Prostate gland (tissue), 2 donors: ENCODE measurements at regions of chr16 and their contacts with region 1.

Region 1: DNA sequence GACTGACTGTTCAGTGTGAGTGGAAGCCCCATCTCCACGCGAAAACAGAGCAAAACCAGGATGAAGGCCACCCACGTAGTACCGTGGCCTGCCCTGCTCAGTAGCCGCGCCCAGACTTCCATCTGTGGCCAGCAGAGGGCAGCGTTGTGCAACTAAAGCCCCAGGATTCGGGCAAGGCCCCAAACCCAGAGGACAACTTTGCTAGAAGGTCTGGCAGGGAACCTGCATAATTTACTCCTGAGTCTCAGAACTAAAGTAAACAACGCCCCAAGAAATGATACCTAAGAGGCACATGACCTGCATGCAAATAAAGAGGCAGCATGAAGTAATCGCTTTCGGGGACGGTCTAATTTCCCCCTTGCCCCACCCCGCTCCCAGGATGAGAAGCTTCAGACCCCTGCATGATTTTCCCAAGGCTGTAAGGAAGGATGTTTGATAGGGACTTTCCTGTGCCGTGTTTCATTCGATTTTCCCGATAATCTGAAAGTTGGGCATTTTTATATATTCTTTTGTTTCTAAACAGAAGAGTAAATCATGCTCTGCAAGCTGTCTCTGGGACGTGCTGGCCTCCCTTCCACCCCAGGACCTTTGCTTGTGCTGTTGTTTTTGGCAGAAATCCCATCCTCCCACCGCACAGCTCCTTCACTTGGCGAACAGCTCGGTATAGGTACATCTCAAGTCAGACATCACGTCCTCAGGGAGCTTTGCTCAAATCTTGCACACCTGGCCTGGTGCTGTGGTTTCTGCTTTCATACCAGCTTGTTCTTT is 18.6 kb downstream of the HSBP1 start:
- DNase-seq: peak; percentile 89
- H3K4me3 ChIP-seq: no peak overlapping the region
- H3K27ac ChIP-seq: no peak overlapping the region
- H3K4me1 ChIP-seq: no peaks in the 10 kb centered on the region
- H3K27me3 ChIP-seq: no peaks in the 10 kb centered on the region
- CTCF ChIP-seq: peak; percentile 73 to 96 (median 90)
- POLR2A ChIP-seq: no peak

Region 2: DNA sequence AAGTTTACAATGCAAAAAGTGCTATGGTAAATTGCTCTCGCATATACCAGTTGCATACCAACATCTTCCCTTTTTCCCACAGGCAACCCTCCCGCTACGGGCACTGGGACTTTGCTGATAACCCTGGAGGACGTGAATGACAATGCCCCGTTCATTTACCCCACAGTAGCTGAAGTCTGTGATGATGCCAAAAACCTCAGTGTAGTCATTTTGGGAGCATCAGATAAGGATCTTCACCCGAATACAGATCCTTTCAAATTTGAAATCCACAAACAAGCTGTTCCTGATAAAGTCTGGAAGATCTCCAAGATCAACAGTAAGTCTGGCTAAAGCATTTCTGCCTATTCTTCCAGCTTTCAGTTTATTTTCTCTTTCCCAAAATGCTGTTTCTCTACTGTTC is 46.4 kb before region 1 on chr16:
- intact Hi-C with region 1: no loop called
- DNase-seq: no peak
- H3K4me3 ChIP-seq: no peak overlapping the region
- H3K27ac ChIP-seq: no peak overlapping the region
- H3K4me1 ChIP-seq: no peaks in the 10 kb centered on the region
- H3K27me3 ChIP-seq: no peaks in the 10 kb centered on the region
- CTCF ChIP-seq: no peak
- POLR2A ChIP-seq: no peak

Region 3: GRCh38 chr16:83878838-83879237 is 52.5 kb after region 1 on chr16:
- intact Hi-C with region 1: loop called (anchors 2 kb)
- DNase-seq: peak; percentile 16
- H3K4me3 ChIP-seq: no peak overlapping the region
- H3K27ac ChIP-seq: no peak overlapping the region
- H3K4me1 ChIP-seq: no peaks in the 10 kb centered on the region
- H3K27me3 ChIP-seq: no peaks in the 10 kb centered on the region
- CTCF ChIP-seq: peak in 3 of 4 experiments; percentile 48 to 61 (median 50)
- POLR2A ChIP-seq: no peak

Region 4: DNA sequence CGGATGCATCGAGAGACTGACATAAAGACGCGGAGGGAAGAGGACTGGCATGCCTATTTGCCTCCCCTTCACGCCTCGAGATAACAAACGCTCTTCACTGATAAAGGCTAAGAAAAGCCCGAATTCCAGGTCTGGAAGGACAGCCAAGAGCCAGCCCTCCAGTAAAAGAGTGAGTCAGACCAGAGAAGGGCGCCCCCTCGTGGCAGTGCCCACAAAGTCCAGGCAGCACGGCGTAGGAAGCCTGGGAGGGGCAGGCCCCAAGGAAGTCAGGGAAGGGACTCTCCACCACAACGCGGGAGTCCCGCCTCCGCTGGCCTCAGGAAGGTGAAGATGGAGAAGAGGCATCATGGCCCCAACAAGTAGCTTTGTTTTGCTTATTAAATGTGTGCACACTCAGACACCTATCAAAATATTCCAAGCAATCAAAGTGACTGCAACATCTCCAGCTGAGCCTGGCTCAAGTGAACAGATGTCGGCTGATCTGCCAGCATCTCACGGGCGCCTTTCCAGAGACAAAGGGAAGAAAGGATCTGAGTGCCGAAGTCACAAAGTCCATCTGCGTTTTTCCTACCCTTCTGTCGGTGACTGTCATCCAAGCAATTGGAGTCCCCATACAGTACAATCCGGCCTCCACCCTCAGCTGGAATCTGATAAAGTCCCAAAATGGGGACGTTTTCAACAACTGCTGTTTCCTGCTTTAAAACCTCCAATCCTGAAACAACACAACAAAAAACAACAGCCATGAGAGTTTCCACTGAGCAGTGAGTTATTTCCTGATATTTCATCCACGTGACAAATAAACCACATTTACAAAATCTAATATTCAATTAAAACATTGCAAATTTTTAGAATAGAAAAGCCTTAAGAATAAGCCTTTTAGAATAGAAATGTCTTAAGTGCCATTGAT is 236.7 kb after region 1 on chr16:
- intact Hi-C with region 1: loop called (anchors 5 kb)
- DNase-seq: peak; percentile 51
- H3K4me3 ChIP-seq: no peak overlapping the region
- H3K27ac ChIP-seq: no peak overlapping the region
- H3K4me1 ChIP-seq: no peaks in the 10 kb centered on the region
- H3K27me3 ChIP-seq: no peaks in the 10 kb centered on the region
- CTCF ChIP-seq: peak; percentile 58 to 83 (median 66)
- POLR2A ChIP-seq: no peak